ENCODE measurements at regions of chr3 and their contacts with region 1.

Region 1: DNA sequence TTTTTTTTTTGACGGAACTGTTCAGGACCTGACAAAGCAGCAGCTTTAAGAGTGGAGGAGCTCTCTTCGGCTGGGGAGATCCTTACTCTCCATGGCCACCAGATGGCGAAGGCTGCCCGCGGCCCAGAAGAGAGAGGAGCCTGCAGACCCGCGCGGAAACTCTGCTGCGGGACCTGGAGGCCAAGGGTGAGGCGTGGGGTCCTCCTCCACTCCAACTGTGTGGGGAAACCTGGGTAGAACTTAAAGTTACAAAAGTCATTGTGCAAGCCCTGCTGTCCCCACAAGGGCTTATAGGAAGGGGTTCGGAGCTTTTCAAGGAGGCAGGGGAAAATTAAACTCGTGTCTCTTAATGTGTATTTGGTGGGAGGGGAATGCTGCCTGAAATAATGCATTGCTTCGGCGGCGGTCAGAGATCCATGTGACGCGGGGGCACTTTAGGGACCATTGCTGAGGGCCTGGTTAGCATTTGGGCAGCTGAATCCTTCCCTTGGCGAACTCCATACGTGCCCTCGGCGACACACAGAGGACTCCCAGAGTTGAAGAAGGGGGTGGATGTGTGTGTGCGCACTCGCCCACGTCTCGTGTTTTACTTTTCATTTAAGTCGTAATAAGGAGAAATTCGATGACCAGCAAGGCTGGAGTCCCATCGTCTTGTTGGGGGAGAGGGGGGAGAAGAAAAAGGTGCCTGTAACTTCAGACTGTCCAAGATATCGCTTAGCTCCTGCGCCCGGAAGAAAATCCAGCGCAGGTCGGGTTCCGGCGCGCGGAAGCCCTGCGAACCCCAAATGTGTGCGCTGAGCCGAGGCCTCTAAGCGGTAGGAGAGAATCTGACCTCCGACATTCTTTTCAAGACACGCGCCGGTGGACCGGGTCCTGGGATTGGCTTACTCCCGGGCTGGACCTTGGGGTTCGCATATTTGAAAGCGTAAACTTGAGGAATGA is 9.7 kb downstream of the EOMES start:
- DNase-seq: peak; percentile 87
- ATAC-seq: peak; percentile 93
- H3K4me3 Mint-ChIP-seq: peak overlapping the region; percentile 88
- H3K27ac Mint-ChIP-seq: peak overlapping the region; percentile 70
- H3K4me1 Mint-ChIP-seq: peaks cover 27% of the 10 kb centered on the region
- H3K27me3 Mint-ChIP-seq: peaks cover 46% of the 10 kb centered on the region

Region 2: GRCh38 chr3:27699067-27699466 is 13.3 kb before region 1 on chr3:
- CTCF ChIA-PET with region 1: interaction called, 12 read pairs
- POLR2A ChIA-PET with region 1: no interaction called
- DNase-seq: no peak
- ATAC-seq: no peak
- H3K4me3 Mint-ChIP-seq: no peak overlapping the region
- H3K27ac Mint-ChIP-seq: no peak overlapping the region
- H3K4me1 Mint-ChIP-seq: no peaks in the 10 kb centered on the region
- H3K27me3 Mint-ChIP-seq: peaks cover 2% of the 10 kb centered on the region

Region 3: GRCh38 chr3:28286595-28286994 is 574.2 kb after region 1 on chr3:
- CTCF ChIA-PET with region 1: interaction called, 13 read pairs
- POLR2A ChIA-PET with region 1: no interaction called
- DNase-seq: no peak
- ATAC-seq: peak; percentile 60
- H3K4me3 Mint-ChIP-seq: no peak overlapping the region
- H3K27ac Mint-ChIP-seq: no peak overlapping the region
- H3K4me1 Mint-ChIP-seq: peaks cover 3% of the 10 kb centered on the region
- H3K27me3 Mint-ChIP-seq: no peaks in the 10 kb centered on the region

Region 4: GRCh38 chr3:28328188-28329151 is 616.1 kb after region 1 on chr3:
- CTCF ChIA-PET with region 1: interaction called, 66 read pairs
- POLR2A ChIA-PET with region 1: interaction called, 3 read pairs
- DNase-seq: no peak
- ATAC-seq: no peak
- H3K4me3 Mint-ChIP-seq: no peak overlapping the region
- H3K27ac Mint-ChIP-seq: no peak overlapping the region
- H3K4me1 Mint-ChIP-seq: peaks cover 33% of the 10 kb centered on the region
- H3K27me3 Mint-ChIP-seq: no peaks in the 10 kb centered on the region

Region 5: DNA sequence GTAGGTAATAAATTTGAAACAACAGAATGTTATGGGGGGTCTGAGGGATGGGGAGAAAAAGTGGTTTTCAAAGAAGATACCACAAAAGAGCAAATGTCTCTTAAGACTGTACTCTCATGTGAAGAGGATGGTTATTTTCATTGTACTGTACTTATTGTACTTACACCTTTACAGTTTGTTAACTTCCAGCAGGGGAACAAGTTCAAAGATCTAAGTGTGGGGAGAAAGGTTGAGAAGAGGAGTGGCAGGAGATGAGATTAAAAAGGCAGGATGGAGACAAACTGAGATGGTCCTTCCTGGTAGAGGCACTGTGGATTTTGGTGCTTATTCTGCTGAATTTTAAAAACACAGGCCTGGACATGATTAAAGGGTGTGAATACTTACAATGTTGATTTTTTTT is 630.7 kb after region 1 on chr3:
- CTCF ChIA-PET with region 1: interaction called, 29 read pairs
- POLR2A ChIA-PET with region 1: interaction called, 12 read pairs
- DNase-seq: no peak
- ATAC-seq: no peak
- H3K4me3 Mint-ChIP-seq: no peak overlapping the region
- H3K27ac Mint-ChIP-seq: no peak overlapping the region
- H3K4me1 Mint-ChIP-seq: peaks cover 45% of the 10 kb centered on the region
- H3K27me3 Mint-ChIP-seq: no peaks in the 10 kb centered on the region

Measured in activated CD8-positive, alpha-beta T cell treated with anti-CD3 and anti-CD28 coated beads, Interleukin-2, amount 10 ng/mL, durations not matched to agents 7 days and 5 days (primary cell).